Activated T-helper 2 cell treated with anti-CD3 and anti-CD28 coated beads, Interferon-gamma antibody, Interleukin-2, Interleukin-4, amounts not matched to agents 10 μg/mL and 5 μg/mL and 100 μg/mL, durations not matched to agents 14 hours and 24 hours and 36 hours (primary cell): ENCODE measurements at regions of chr10 and their contacts with region 1.

Region 1: DNA sequence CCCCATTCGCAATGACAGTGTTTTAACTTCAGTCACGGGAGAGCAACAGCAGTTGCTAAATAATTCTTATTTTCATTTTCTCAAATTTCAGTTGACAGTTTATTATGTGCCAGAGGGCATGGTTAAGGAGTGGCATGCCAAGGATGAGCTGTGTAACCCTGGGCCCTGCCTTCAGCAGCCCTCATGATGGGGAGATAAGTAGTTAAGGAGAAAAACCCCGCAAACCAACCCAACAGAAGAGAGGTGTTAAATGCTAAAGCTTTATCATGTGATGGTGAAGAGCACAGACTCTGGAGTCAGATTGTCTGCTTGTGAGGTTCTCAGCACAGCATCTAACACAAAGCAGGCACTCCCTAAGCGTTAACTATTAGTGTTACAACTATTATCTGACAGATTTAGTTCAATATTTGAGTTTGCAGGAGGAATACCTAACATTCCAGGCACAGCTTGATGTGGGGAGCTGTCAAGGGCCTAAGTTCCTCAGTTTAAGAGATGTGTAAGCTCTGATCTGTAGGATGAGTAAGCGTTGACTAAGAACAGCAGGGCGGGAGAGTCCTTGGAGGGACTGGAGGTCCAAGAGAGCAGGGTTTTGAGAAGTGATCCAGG is 29.6 kb downstream of the STAM start:
- DNase-seq: no peak
- H3K4me3 Mint-ChIP-seq: no peak overlapping the region
- H3K27ac Mint-ChIP-seq: peak overlapping the region; percentile 79
- H3K4me1 Mint-ChIP-seq: peaks cover 56% of the 10 kb centered on the region
- H3K27me3 Mint-ChIP-seq: no peaks in the 10 kb centered on the region

Region 2: DNA sequence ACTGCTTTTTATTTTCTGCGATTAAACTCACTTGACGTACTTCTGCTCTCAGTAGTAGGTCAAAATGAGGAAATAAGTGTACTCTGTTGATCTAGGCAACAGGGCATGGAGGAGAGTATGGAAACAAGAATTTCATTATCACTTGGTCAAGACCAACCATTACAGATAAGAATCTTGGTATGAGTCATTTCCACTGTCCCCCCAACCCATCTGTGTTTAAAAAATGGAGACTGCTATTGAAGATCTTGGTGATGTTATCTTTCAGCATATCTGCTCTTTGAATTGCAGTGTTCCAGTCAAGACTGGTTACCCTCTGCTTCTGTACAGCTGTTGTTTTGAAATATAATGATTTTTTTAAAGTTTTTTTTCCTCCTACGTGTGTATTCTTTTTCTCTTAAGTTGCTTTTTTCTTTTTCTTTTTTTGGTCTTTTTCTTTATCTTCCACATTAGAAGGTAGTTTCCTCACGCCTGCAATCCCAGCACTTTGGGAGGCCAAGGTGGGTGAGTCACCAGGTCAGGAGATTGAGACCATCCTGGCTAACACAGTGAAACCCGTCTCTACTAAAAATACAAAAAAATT is 17.9 kb before region 1 on chr10:
- intact Hi-C with region 1: loop called (anchors 2 kb)
- DNase-seq: no peak
- H3K4me3 Mint-ChIP-seq: peak overlapping the region; percentile 11
- H3K27ac Mint-ChIP-seq: peak overlapping the region; percentile 70
- H3K4me1 Mint-ChIP-seq: peaks cover 55% of the 10 kb centered on the region
- H3K27me3 Mint-ChIP-seq: no peaks in the 10 kb centered on the region

Region 3: GRCh38 chr10:17685233-17685840 is 11.8 kb after region 1 on chr10:
- intact Hi-C with region 1: loop called (anchors 1 kb)
- DNase-seq: no peak
- H3K4me3 Mint-ChIP-seq: no peak overlapping the region
- H3K27ac Mint-ChIP-seq: peak overlapping the region; percentile 85
- H3K4me1 Mint-ChIP-seq: peaks cover 29% of the 10 kb centered on the region
- H3K27me3 Mint-ChIP-seq: no peaks in the 10 kb centered on the region